CD8-positive, alpha-beta T cell (primary cell): ENCODE measurements at regions of chr18 and their contacts with region 1.

Region 1: DNA sequence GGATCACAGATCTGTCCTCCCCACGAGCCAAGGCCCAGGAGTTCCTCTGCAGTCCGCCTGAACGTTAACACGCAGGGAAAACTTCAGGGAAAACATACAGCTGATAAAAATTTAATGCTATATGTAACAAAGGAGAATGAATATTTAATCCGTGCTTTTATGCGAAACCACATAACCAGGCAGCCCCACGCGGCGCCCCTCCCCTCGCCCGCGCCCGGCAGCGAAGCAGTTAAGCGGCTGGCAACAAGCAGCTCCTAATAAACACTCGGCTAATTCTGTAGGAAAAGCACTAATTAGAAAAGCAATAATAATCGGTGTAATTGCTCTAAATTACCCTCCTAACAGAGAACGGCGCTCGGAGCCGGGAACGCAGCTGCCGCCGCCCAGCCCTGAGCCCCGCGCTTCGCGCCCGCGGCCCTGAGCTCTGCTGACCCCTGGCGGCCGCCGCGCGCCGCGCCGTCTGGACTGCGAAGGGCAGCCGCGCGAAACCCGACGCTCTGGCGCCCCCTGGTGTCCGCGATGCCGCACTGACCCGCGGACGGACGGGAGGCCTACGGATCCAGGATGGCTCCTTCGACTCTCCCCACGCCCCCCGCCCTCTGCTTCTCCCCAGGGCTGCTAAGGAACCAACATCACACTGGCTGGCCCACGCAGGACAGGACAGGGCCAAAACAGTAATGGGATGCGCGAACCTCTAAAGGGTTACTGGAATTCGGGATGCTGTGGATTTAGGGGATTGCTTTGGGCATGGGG is 181.4 kb downstream of the SMAD2 start:
- DNase-seq: peak; percentile 69 to 90 (median 80)
- ATAC-seq: peak; percentile 99
- H3K4me3 ChIP-seq: peak overlapping the region in 1 of 2 experiments; percentile 21
- H3K4me3 Mint-ChIP-seq: peak overlapping the region; percentile 42
- H3K27ac ChIP-seq: no peak overlapping the region
- H3K27ac Mint-ChIP-seq: no peak overlapping the region
- H3K4me1 ChIP-seq: no peaks in the 10 kb centered on the region
- H3K4me1 Mint-ChIP-seq: no peaks in the 10 kb centered on the region
- H3K27me3 ChIP-seq: no peaks in the 10 kb centered on the region
- H3K27me3 Mint-ChIP-seq: peaks cover 13% of the 10 kb centered on the region
- CTCF ChIP-seq: peak; percentile 100

Region 2: DNA sequence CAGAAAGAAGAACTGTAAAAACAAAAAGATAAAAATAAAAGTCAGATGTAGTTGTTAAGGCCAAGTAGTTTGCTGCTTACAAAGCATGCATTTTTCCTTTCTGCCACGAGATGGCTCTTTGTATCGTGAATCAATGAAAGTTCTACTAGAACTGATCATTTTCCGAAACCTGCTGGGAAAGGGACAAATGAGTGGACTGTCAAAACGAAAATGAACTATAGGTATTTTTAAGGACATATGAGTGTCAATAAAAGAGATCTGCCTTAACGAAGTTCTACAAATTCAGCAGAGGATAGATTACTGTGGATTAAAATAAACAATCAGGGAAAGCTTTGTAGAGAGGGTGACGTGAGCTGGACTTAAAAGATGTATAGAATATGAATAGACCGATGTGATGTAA is 698.6 kb before region 1 on chr18:
- CTCF ChIA-PET with region 1: interaction called, 7 read pairs
- POLR2A ChIA-PET with region 1: no interaction called
- intact Hi-C with region 1: loop called in 1 of 2 experiments (anchors 2 kb)
- DNase-seq: peak in 2 of 9 experiments; percentile 36 to 49
- ATAC-seq: no peak
- H3K4me3 ChIP-seq: no peak overlapping the region
- H3K4me3 Mint-ChIP-seq: no peak overlapping the region
- H3K27ac ChIP-seq: no peak overlapping the region
- H3K27ac Mint-ChIP-seq: no peak overlapping the region
- H3K4me1 ChIP-seq: no peaks in the 10 kb centered on the region
- H3K4me1 Mint-ChIP-seq: no peaks in the 10 kb centered on the region
- H3K27me3 ChIP-seq: no peaks in the 10 kb centered on the region
- H3K27me3 Mint-ChIP-seq: peaks cover 5% of the 10 kb centered on the region
- CTCF ChIP-seq: peak; percentile 66

Region 3: DNA sequence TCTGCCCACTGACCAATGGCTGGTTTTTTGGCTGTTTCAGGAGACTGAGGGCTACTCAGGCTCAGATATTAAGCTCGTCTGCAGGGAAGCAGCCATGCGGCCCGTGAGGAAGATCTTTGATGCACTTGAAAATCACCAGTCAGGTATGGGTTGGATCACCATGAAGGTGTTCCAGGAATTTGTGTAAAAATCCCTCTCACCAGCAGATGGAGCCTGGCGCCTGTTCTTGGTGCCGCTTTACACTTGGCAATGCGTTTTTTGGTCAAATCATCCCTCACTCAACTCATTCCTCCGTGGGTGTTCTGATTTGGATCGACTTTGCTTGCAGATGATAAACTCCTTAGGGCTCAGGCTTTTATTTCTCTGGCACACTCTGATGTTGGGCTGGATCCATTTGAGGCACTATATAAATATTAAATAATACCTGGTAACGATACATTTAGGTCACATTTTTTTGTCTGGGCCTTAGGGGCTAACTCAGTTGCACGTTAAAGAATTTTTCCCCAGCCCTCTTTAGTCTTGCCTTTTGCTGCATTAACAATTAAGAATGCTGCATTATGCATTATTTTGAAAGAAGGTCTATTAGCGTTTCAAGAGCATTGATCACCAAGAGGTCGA is 648.7 kb before region 1 on chr18:
- CTCF ChIA-PET with region 1: interaction called, 8 read pairs
- POLR2A ChIA-PET with region 1: no interaction called
- intact Hi-C with region 1: loop called (anchors 1 kb)
- DNase-seq: peak; percentile 29 to 73 (median 57)
- ATAC-seq: no peak
- H3K4me3 ChIP-seq: no peak overlapping the region
- H3K4me3 Mint-ChIP-seq: no peak overlapping the region
- H3K27ac ChIP-seq: no peak overlapping the region
- H3K27ac Mint-ChIP-seq: no peak overlapping the region
- H3K4me1 ChIP-seq: no peaks in the 10 kb centered on the region
- H3K4me1 Mint-ChIP-seq: no peaks in the 10 kb centered on the region
- H3K27me3 ChIP-seq: no peaks in the 10 kb centered on the region
- H3K27me3 Mint-ChIP-seq: no peaks in the 10 kb centered on the region
- CTCF ChIP-seq: peak; percentile 90

Region 4: GRCh38 chr18:47215554-47216138 is 533.4 kb before region 1 on chr18:
- CTCF ChIA-PET with region 1: interaction called, 3 read pairs
- POLR2A ChIA-PET with region 1: no interaction called
- intact Hi-C with region 1: loop called (anchors 1 to 2 kb)
- DNase-seq: peak in 2 of 9 experiments; percentile 26 to 43
- ATAC-seq: no peak
- H3K4me3 ChIP-seq: no peak overlapping the region
- H3K4me3 Mint-ChIP-seq: no peak overlapping the region
- H3K27ac ChIP-seq: no peak overlapping the region
- H3K27ac Mint-ChIP-seq: no peak overlapping the region
- H3K4me1 ChIP-seq: no peaks in the 10 kb centered on the region
- H3K4me1 Mint-ChIP-seq: no peaks in the 10 kb centered on the region
- H3K27me3 ChIP-seq: no peaks in the 10 kb centered on the region
- H3K27me3 Mint-ChIP-seq: peaks cover 39% of the 10 kb centered on the region
- CTCF ChIP-seq: no peak